AG04449 (cell line): ENCODE measurements at regions of chr2 and their contacts with region 1.

Region 1: GRCh38 chr2:112941753-112942658 is 31.0 kb downstream of the IL37 start:
- DNase-seq: peak; percentile 14
- H3K4me3 ChIP-seq: no peak overlapping the region
- CTCF ChIP-seq: peak; percentile 95

Region 2: DNA sequence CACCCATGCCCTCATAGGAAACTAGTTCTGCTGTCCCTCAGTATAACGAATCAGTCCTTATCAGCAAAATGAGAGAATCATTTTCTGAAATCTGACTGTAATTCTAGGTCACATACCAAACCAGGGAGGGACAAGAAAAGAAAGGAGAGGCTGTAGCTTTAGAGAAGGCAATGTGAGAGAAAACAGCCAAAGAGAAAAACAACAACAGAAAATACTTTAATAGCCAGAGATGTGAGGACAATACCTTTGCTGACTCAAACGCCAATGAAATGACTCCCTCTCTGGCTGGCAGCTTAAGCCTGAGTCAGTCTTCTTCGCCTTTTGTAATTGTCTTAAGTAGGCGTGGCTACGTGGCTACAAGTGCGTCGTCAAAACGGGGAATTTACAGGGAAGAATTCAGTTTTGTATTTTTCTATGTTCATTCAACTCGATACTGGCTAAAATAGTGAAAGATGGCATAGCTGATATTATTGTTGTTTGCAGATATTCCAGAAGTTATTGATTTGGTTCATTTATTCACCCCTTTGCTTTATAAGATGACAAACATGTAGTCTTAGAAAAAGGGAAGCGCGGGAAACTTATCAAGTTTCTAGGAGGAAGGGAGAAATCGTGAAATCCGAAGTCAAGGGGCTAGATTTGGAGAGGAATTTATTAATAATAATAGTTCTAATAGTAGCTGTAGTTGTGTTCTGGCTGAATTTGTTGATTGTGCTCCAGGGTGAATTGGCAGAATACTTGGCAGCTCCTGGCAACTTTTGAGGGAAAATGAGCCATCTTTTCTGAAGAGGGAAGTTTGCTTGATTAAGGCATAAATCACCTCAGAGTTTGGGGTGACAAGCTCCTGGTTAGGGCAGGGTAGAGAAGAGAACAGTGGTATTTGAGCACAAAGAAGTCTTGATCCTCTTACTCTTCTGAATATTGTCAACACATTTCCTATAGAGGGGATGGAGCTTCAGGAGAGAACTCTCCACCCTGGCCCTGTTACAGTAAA is 157.5 kb before region 1 on chr2 and contains the start of gene IL1A:
- CTCF ChIA-PET with region 1: interaction called, 17 read pairs
- POLR2A ChIA-PET with region 1: no interaction called
- DNase-seq: peak; percentile 14
- H3K4me3 ChIP-seq: no peak within 1 kb of the TSS
- CTCF ChIP-seq: no peak

Region 3: DNA sequence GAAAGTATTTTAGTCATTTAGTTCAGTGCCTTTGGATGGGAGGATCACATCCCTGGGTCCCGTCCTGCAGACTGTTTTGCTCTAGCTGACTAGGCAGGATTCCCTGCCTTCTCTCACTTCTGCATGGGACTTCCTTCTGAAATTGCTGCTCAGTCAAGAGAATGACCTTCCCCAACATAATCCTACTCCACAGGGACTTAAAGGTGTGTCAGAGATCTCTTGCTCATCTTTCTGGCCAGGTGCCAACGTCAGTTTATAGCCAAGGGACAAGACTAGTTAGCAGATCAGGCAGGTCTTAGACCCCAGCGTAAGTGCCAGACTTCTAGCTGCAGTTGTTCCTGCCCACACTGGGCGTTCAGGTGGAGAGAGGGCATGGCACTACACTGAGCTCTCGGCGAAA is 96.0 kb before region 1 on chr2:
- CTCF ChIA-PET with region 1: no interaction called
- POLR2A ChIA-PET with region 1: no interaction called
- DNase-seq: no peak
- H3K4me3 ChIP-seq: no peak overlapping the region
- CTCF ChIP-seq: no peak

Region 4: DNA sequence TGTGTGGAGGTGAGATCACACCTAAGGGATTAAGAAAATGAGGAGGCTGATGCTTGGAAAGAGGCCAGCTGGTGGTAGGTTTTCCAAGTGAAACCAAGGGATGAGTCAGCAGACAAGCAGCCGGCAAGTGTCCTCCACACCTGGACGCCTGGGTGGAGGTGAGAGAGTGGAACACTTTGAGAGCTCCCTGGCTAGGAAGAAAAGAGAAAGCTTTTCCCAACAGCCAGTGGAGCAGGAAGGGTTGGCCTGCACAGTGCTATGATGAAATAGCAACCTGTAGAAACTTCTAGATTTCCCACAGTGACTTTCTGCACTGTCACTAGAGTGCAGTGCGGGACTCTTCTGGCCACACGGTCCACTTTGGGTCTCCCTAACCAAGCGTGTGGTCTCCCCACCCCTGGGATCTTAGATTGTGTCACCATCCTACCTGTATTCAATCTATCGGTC is 50.6 kb before region 1 on chr2:
- CTCF ChIA-PET with region 1: interaction called, 12 read pairs
- POLR2A ChIA-PET with region 1: no interaction called
- DNase-seq: no peak
- H3K4me3 ChIP-seq: no peak overlapping the region
- CTCF ChIP-seq: no peak

Region 5: GRCh38 chr2:112920923-112921532 is 21.0 kb before region 1 on chr2:
- CTCF ChIA-PET with region 1: interaction called, 70 read pairs
- POLR2A ChIA-PET with region 1: no interaction called
- DNase-seq: no peak
- H3K4me3 ChIP-seq: no peak overlapping the region
- CTCF ChIP-seq: no peak

Region 6: GRCh38 chr2:112958428-112959108 is 16.6 kb after region 1 on chr2:
- CTCF ChIA-PET with region 1: interaction called, 47 read pairs
- POLR2A ChIA-PET with region 1: no interaction called
- DNase-seq: no peak
- H3K4me3 ChIP-seq: no peak overlapping the region
- CTCF ChIP-seq: peak; percentile 81